CD8-positive, alpha-beta memory T cell (primary cell): ENCODE measurements at regions of chr5 and their contacts with region 1.

Region 1: DNA sequence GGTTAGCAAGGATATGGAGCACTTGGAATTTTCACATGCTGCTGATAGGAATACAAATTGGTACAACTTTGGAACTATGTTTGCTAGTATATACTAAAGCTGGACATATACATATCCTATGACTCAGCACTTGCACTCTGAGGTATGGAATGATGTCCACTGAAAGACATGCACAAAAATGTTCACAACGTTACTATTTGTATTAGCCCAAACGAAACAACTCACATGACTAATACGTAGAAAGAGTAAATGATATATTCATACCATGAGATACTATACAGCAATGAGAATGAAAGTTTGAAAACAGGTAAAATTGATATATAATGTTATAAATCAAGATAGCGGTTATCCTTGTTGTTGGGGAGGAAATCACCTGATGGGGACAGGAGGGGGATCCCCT is 45.5 kb upstream of the CDC42SE2 start:
- DNase-seq: no peak
- H3K4me3 ChIP-seq: no peak overlapping the region
- H3K4me3 Mint-ChIP-seq: no peak overlapping the region
- H3K27ac ChIP-seq: no peak overlapping the region
- H3K27ac Mint-ChIP-seq: no peak overlapping the region
- H3K4me1 ChIP-seq: peaks cover 10% of the 10 kb centered on the region
- H3K4me1 Mint-ChIP-seq: peaks cover 15 to 52% (median 28%) of the 10 kb centered on the region in 3 donors
- H3K27me3 ChIP-seq: no peaks in the 10 kb centered on the region
- H3K27me3 Mint-ChIP-seq: peaks cover 0 to 1% of the 10 kb centered on the region in 2 donors

Region 2: GRCh38 chr5:131229623-131230022 is 11.2 kb after region 1 on chr5:
- CTCF ChIA-PET with region 1: interaction called, 4 read pairs
- POLR2A ChIA-PET with region 1: interaction called, 11 read pairs
- DNase-seq: no peak
- H3K4me3 ChIP-seq: no peak overlapping the region
- H3K4me3 Mint-ChIP-seq: no peak overlapping the region
- H3K27ac ChIP-seq: no peak overlapping the region
- H3K27ac Mint-ChIP-seq: peak overlapping the region in 3 of 8 donors; percentile 42 to 58 (median 49)
- H3K4me1 ChIP-seq: peaks cover 6% of the 10 kb centered on the region
- H3K4me1 Mint-ChIP-seq: peaks cover 6 to 11% (median 7%) of the 10 kb centered on the region in 3 donors
- H3K27me3 ChIP-seq: no peaks in the 10 kb centered on the region
- H3K27me3 Mint-ChIP-seq: no peaks in the 10 kb centered on the region

Region 3: GRCh38 chr5:131357739-131358561 is 139.6 kb after region 1 on chr5:
- CTCF ChIA-PET with region 1: no interaction called
- POLR2A ChIA-PET with region 1: interaction called, 10 read pairs
- DNase-seq: no peak
- H3K4me3 ChIP-seq: no peak overlapping the region
- H3K4me3 Mint-ChIP-seq: peak overlapping the region in 6 of 7 donors; percentile 7 to 70 (median 30)
- H3K27ac ChIP-seq: no peak overlapping the region
- H3K27ac Mint-ChIP-seq: peak overlapping the region; percentile 74 to 96 (median 86)
- H3K4me1 ChIP-seq: peaks cover 49% of the 10 kb centered on the region
- H3K4me1 Mint-ChIP-seq: peaks cover 64 to 93% (median 83%) of the 10 kb centered on the region in 3 donors
- H3K27me3 ChIP-seq: no peaks in the 10 kb centered on the region
- H3K27me3 Mint-ChIP-seq: no peaks in the 10 kb centered on the region